ENCODE measurements at regions of chr4 and their contacts with region 1.

Region 1: DNA sequence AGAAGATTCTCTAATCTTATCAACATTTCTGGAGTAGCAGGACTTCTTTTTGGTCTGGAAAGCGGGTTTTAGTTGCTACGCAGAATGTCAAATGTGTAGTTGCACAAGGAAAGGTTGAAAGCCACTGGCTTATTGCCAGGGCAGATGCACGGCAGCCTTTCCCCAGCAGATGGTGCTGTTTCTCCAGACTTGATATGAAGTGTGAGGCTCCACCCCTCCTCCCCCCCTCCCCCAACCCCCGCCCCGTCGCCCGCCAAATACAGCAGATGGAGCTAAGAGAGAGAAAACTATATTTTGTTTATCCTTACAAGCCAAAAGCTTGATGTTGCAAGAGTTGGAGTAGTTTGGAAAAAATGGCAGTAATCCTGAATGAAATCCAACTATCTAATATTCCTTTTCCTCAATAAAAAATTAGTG is 32.0 kb downstream of the ENOPH1 start:
- DNase-seq: peak; percentile 86
- H3K4me3 ChIP-seq: no peak overlapping the region
- H3K27ac ChIP-seq: peak overlapping the region in 1 of 2 donors; percentile 20
- H3K4me1 ChIP-seq: no peaks in the 10 kb centered on the region
- H3K27me3 ChIP-seq: no peaks in the 10 kb centered on the region
- CTCF ChIP-seq: peak; percentile 70 to 89 (median 78)
- POLR2A ChIP-seq: no peak

Region 2: GRCh38 chr4:82739316-82740179 is 277.1 kb after region 1 on chr4:
- intact Hi-C with region 1: loop called (anchors 5 kb)
- DNase-seq: peak; percentile 42
- H3K4me3 ChIP-seq: no peak overlapping the region
- H3K27ac ChIP-seq: no peak overlapping the region
- H3K4me1 ChIP-seq: no peaks in the 10 kb centered on the region
- H3K27me3 ChIP-seq: no peaks in the 10 kb centered on the region
- CTCF ChIP-seq: peak; percentile 70 to 81 (median 76)
- POLR2A ChIP-seq: no peak

Region 3: GRCh38 chr4:82798168-82799005 is 336.0 kb after region 1 on chr4 and contains the start of gene SCD5:
- intact Hi-C with region 1: loop called (anchors 2 kb)
- DNase-seq: peak; percentile 68
- H3K4me3 ChIP-seq: peak within 1 kb of the TSS; percentile 47 to 63
- H3K27ac ChIP-seq: peak within 1 kb of the TSS; percentile 55 to 73
- H3K4me1 ChIP-seq: no peaks in the 10 kb centered on the region
- H3K27me3 ChIP-seq: no peaks in the 10 kb centered on the region
- CTCF ChIP-seq: no peak
- POLR2A ChIP-seq: peak; percentile 18
- total RNA-seq, gene SCD5: 24.0 to 122 TPM

Region 4: GRCh38 chr4:82900331-82901128 is 438.1 kb after region 1 on chr4 and contains the start of gene THAP9:
- intact Hi-C with region 1: loop called (anchors 5 kb)
- DNase-seq: peak; percentile 99
- H3K4me3 ChIP-seq: peak within 1 kb of the TSS; percentile 42 to 49
- H3K27ac ChIP-seq: peak within 1 kb of the TSS; percentile 96 to 99
- H3K4me1 ChIP-seq: no peaks in the 10 kb centered on the region
- H3K27me3 ChIP-seq: no peaks in the 10 kb centered on the region
- CTCF ChIP-seq: no peak
- POLR2A ChIP-seq: peak; percentile 82
- total RNA-seq, gene THAP9: 7.6 to 8.6 TPM

Region 5: GRCh38 chr4:83034630-83035494 is 572.4 kb after region 1 on chr4 and contains the start of gene COPS4:
- intact Hi-C with region 1: loop called (anchors 10 kb)
- DNase-seq: peak; percentile 99
- H3K4me3 ChIP-seq: peak within 1 kb of the TSS; percentile 56 to 58
- H3K27ac ChIP-seq: peak within 1 kb of the TSS; percentile 85 to 87
- H3K4me1 ChIP-seq: no peaks in the 10 kb centered on the region
- H3K27me3 ChIP-seq: no peaks in the 10 kb centered on the region
- CTCF ChIP-seq: peak in 3 of 4 experiments; percentile 38 to 75 (median 69)
- POLR2A ChIP-seq: peak; percentile 82
- total RNA-seq, gene COPS4: 50.5 to 56.9 TPM

Region 6: DNA sequence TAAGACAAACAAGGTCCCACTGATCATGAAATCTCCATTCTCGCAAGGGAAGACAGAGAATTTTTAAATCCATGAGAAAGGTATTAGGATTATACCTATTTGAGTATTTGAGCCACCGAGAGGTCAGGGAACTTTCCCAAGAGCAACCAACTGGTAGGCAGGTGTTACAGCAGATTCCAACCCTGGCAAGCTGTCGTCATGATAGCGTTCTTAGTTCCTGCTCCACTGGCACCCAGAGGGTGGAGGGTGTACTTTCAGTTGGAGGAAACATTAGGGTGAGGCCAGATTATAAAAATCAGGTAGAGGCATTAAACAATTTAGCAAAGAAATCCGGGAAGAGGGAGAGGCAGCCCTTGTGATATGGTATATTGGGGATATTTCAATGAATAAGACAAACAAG is 798.9 kb after region 1 on chr4:
- intact Hi-C with region 1: loop called (anchors 5 kb)
- DNase-seq: no peak
- H3K4me3 ChIP-seq: no peak overlapping the region
- H3K27ac ChIP-seq: no peak overlapping the region
- H3K4me1 ChIP-seq: no peaks in the 10 kb centered on the region
- H3K27me3 ChIP-seq: no peaks in the 10 kb centered on the region
- CTCF ChIP-seq: no peak
- POLR2A ChIP-seq: no peak

Region 7: DNA sequence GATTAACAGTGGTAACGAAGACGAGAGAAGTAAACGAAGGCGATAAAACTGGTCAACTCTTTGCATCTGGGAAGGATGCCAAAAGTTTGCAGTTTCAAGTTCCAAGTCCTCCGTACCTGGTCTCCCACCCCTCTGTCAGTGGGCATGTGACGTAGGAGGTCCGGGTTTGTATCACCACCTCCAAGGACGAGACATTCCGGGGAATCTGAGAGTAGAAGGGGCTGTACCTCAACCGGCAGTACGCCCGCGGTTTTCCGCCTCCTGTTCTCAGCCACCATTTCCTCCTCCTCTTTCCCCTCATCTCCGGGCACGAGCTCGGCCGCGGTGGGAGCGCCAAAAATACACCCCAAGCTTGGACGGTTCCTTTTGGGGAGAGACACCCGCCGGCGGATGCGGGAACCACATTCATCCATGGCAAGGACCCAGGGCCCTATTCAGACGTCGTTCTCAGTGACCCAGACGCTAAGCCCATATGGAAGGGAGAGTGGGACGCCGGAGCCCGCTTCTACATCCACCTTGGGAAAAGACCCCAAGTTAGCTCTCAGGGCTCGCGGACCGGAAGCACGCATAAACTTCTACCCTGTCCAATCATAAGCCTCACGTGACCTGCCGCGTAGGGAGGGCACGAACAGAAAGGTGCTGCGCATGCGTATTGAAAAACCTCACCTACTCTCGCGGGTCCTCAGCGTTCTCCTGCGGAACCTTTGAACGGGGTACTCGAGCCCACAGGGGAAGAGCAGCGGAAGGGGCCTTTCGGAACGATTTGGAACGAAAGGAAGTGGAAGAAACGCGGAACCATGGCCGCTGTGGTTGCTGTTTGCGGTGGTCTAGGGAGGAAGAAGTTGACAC is 993.1 kb after region 1 on chr4 and contains the starts of genes HELQ and MRPS18C:
- intact Hi-C with region 1: loop called (anchors 5 kb)
- DNase-seq: peak; percentile 97
- H3K4me3 ChIP-seq: peak within 1 kb of the TSS; percentile 72 to 86
- H3K27ac ChIP-seq: peak within 1 kb of the TSS; percentile 96 to 98
- H3K4me1 ChIP-seq: no peaks in the 10 kb centered on the region
- H3K27me3 ChIP-seq: no peaks in the 10 kb centered on the region
- CTCF ChIP-seq: peak in 2 of 4 experiments; percentile 37 to 42
- POLR2A ChIP-seq: peak; percentile 77
- total RNA-seq, gene HELQ: 15.5 to 20.9 TPM
- total RNA-seq, gene MRPS18C: 12.2 to 30.8 TPM